Endothelial cell of umbilical vein (primary cell): ENCODE measurements at regions of chr12 and their contacts with region 1.

Region 1: DNA sequence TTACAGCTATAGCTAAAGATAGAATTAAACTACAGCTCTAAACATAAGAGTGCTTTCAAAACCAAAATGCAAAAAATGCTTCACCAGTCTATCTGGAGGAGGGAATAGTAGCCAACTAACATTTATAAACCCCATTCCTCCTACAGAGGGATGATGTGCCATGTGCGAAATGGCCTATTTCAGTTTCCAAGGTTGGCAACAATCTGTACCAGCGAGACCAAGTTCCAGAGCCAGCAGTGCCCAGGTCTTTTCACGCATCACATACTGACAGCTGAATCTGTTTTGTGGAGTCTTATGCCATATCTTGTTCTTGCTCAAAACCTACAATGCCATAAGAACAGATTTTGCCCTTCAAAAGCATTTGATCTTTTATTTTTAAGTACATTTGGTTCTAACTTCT is 24.5 kb downstream of the NELL2 start:
- DNase-seq: no peak
- H3K4me3 ChIP-seq: no peak overlapping the region
- H3K27ac ChIP-seq: no peak overlapping the region
- H3K4me1 ChIP-seq: no peaks in the 10 kb centered on the region
- H3K27me3 ChIP-seq: no peaks in the 10 kb centered on the region
- CTCF ChIP-seq: no peak
- POLR2A ChIP-seq: no peak

Region 2: GRCh38 chr12:44876554-44877275 is 25.1 kb after region 1 on chr12:
- CTCF ChIA-PET with region 1: no interaction called
- POLR2A ChIA-PET with region 1: no interaction called
- dilution Hi-C with region 1: no loop called
- intact Hi-C with region 1: loop called (anchors 1 kb)
- DNase-seq: no peak
- H3K4me3 ChIP-seq: peak overlapping the region; percentile 10 to 52 (median 35)
- H3K27ac ChIP-seq: no peak overlapping the region
- H3K4me1 ChIP-seq: peaks cover 11% of the 10 kb centered on the region
- H3K27me3 ChIP-seq: peaks cover 27 to 44% of the 10 kb centered on the region in 2 experiments
- CTCF ChIP-seq: no peak
- POLR2A ChIP-seq: no peak

Region 3: DNA sequence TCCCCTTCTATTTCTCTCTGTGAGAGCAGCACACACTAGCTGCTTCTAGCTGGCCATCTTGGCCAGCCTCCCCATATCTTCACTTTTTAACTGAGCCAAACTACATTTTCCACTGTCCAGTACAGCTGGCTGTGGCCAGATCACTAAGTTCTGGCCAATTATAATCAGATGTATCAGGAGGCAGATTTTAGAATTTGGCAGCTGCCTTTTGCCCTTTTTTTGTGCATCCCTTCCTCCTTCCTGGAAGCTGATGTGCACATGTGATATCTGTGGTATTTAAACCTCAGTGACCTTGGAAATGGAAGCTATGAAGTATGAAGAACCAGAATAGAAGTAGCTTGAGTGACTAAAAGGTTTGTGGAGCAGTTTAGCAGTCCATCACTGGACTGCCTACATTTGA is 314.5 kb after region 1 on chr12:
- CTCF ChIA-PET with region 1: no interaction called
- POLR2A ChIA-PET with region 1: no interaction called
- dilution Hi-C with region 1: no loop called
- intact Hi-C with region 1: no loop called
- DNase-seq: peak; percentile 11
- H3K4me3 ChIP-seq: no peak overlapping the region
- H3K27ac ChIP-seq: no peak overlapping the region
- H3K4me1 ChIP-seq: no peaks in the 10 kb centered on the region
- H3K27me3 ChIP-seq: peaks cover 0 to 5% of the 10 kb centered on the region in 2 experiments
- CTCF ChIP-seq: no peak
- POLR2A ChIP-seq: no peak